GM12878 (cell line): ENCODE measurements at regions of chr15 and their contacts with region 1.

Region 1: DNA sequence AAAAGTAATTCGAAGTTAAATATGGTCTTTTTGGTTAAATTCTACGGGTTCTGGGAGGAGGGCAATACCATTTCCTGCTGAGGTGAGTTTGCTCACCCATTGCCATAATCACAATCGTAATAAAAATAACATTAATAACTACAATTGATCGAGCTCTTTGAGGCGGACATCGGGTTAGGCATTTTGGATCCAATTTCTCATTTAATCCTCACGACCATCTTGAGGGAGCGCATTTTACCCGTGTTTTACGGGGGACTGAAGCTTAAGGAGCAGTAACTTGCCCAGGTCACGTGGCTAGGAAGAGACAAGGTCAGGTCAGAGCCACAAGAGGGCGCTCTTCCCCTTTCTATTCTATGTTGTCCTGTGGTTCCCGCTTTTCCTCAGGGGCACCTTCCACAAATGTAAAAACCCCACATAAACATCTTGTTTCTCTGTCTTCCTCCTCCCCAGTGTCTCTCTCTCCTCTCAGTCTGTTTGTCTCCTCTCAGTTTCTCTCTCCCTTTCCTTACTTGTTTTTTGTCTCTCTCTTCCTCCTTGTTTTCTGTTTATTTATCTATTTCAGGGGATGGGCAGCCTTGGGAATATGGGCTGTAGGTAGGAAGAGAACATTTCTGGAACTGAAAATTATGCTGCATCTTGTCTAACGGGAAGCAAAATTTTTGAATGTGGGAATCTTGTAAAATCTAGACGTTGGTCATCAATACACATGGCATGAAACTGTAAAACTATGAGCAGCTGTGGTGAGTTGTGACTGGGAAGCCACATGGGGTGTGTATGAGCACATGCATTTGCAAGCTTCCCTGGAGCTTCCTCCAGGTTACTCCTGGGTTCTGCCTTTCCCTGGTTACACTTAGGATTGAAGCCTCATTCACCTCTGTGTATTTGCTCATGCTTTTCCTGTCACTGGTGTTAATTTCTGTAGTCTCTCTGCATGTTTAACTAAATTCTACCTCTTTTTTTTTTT is 71.0 kb downstream of the SQOR start:
- DNase-seq: peak; percentile 63
- ATAC-seq: peak; percentile 94
- H3K4me3 ChIP-seq: peak overlapping the region; percentile 67
- H3K27ac ChIP-seq: no peak overlapping the region
- H3K4me1 ChIP-seq: peaks cover 3% of the 10 kb centered on the region; the same call in 1 of the 2 replicates
- H3K27me3 ChIP-seq: peaks cover 3 to 4% of the 10 kb centered on the region in 2 experiments; a peak in 2 of 4 replicates
- CTCF ChIP-seq: peak; percentile 86 to 89 (median 88)
- EP300 ChIP-seq: no peak
- POLR2A ChIP-seq: no peak
- RAD21 ChIP-seq: peak; percentile 61

Region 2: GRCh38 chr15:45690581-45691260 is 15.1 kb before region 1 on chr15:
- CTCF ChIA-PET with region 1: interaction called, 17 read pairs
- POLR2A ChIA-PET with region 1: no interaction called
- RAD21 ChIA-PET with region 1: interaction called, 3 read pairs
- SMC1A ChIA-PET with region 1: interaction called, 7 read pairs
- in situ Hi-C with region 1: no loop called
- intact Hi-C with region 1: no loop called
- DNase-seq: no peak
- ATAC-seq: no peak
- H3K4me3 ChIP-seq: no peak overlapping the region
- H3K27ac ChIP-seq: no peak overlapping the region
- H3K4me1 ChIP-seq: no peaks in the 10 kb centered on the region
- H3K27me3 ChIP-seq: no peaks in the 10 kb centered on the region
- CTCF ChIP-seq: no peak
- EP300 ChIP-seq: no peak
- POLR2A ChIP-seq: no peak
- RAD21 ChIP-seq: no peak

Region 3: DNA sequence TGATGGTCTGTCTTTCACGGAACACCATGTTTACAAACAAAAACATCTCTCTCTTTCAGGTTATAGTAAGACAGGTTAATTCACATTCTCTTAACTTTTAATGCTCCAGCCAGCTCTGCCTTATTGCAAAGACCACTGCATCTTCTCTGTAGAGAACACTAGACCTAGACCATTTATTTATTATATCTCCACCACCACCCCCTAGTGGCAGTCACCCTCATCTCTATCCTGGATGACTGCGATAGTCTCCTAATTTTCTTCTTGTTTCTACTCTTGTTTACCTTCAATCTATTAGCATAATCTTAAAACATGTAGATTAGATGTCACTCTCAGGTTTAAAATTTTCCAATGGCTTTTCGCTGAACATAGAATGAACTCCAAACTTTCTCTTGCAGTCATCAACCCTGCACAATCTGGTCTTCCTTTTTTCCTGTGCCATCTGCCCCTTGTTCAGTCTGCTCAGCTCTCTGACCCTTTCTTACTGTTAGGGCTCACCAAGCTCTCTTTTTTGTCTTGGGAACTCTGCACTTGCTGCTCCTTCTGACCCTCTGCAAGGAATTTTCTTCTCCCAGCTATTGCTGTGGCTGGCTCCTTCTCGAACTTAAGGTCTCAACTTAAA is 84.6 kb after region 1 on chr15:
- CTCF ChIA-PET with region 1: interaction called, 38 read pairs
- POLR2A ChIA-PET with region 1: no interaction called
- RAD21 ChIA-PET with region 1: interaction called, 10 read pairs
- SMC1A ChIA-PET with region 1: interaction called, 14 read pairs
- in situ Hi-C with region 1: loop called (anchors 5 kb)
- intact Hi-C with region 1: loop called (anchors 5 kb)
- DNase-seq: no peak
- ATAC-seq: peak; percentile 80
- H3K4me3 ChIP-seq: no peak overlapping the region
- H3K27ac ChIP-seq: no peak overlapping the region
- H3K4me1 ChIP-seq: no peaks in the 10 kb centered on the region
- H3K27me3 ChIP-seq: no peaks in the 10 kb centered on the region
- CTCF ChIP-seq: peak; percentile 33 to 46 (median 37); a peak in 4 of 6 replicates
- EP300 ChIP-seq: no peak
- POLR2A ChIP-seq: no peak
- RAD21 ChIP-seq: peak; percentile 33; the same call in 1 of the 2 replicates

Region 4: DNA sequence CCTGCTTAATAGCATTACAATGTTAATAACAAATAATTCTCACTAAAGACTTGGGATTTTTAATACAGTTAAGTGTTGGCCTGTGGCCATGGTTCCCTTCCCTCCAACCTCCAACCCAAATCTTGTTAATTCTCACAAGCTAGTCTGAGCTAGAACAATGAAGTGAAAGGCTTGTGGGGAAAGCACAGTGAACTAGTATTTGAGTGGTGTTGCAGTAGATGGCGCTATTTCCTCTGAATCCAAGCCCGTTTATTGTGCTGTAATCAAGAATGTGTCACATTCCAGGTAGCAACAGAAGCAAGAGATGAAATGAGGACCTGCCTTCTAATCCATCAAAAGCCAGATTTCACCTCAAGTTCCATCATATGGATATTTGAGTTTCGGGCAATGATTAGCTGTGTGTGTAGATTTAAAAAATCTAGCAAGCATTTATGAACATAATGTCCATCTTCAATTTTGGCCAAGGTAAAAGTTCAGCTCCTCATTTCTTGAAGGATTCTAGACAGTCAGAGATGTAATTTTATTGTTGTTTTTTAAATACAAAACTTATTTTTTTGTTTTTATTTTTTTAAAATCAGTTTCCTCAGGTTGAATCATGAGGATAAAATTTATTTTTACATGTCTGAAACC is 89.8 kb after region 1 on chr15:
- CTCF ChIA-PET with region 1: interaction called, 38 read pairs
- POLR2A ChIA-PET with region 1: no interaction called
- RAD21 ChIA-PET with region 1: interaction called, 10 read pairs
- SMC1A ChIA-PET with region 1: interaction called, 14 read pairs
- in situ Hi-C with region 1: no loop called
- intact Hi-C with region 1: loop called (anchors 5 kb)
- DNase-seq: no peak
- ATAC-seq: peak; percentile 66
- H3K4me3 ChIP-seq: no peak overlapping the region
- H3K27ac ChIP-seq: no peak overlapping the region
- H3K4me1 ChIP-seq: no peaks in the 10 kb centered on the region
- H3K27me3 ChIP-seq: no peaks in the 10 kb centered on the region
- CTCF ChIP-seq: peak; percentile 45 to 50 (median 46); a peak in 4 of 6 replicates
- EP300 ChIP-seq: no peak
- POLR2A ChIP-seq: no peak
- RAD21 ChIP-seq: peak; percentile 49

Region 5: DNA sequence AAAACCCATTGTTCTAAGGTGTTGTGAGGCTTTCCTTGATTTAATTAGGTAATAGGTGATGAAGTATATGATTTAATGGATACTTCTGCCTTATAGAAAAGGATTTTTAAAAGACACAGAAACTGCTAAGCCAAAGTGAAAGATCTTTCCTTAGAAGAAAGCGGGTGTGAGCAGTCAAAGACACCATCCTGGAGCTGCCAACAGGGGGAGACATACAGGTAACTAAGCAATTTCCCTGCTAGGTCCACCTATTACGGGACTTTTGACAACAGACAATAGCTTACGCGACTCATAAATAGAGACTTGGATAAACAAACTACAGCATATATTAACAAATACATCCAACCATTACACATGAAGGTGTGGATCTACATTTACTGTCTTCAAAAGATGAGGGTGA is 598.5 kb after region 1 on chr15:
- CTCF ChIA-PET with region 1: no interaction called
- POLR2A ChIA-PET with region 1: no interaction called
- RAD21 ChIA-PET with region 1: no interaction called
- SMC1A ChIA-PET with region 1: no interaction called
- in situ Hi-C with region 1: no loop called
- intact Hi-C with region 1: loop called (anchors 10 kb)
- DNase-seq: no peak
- ATAC-seq: no peak
- H3K4me3 ChIP-seq: no peak overlapping the region
- H3K27ac ChIP-seq: no peak overlapping the region
- H3K4me1 ChIP-seq: no peaks in the 10 kb centered on the region
- H3K27me3 ChIP-seq: no peaks in the 10 kb centered on the region
- CTCF ChIP-seq: peak in 2 of 3 experiments; percentile 14 to 17; a peak in 1 of 6 replicates
- EP300 ChIP-seq: no peak
- POLR2A ChIP-seq: no peak
- RAD21 ChIP-seq: no peak